ENCODE measurements at regions of chr17 and their contacts with region 1.

Region 1: DNA sequence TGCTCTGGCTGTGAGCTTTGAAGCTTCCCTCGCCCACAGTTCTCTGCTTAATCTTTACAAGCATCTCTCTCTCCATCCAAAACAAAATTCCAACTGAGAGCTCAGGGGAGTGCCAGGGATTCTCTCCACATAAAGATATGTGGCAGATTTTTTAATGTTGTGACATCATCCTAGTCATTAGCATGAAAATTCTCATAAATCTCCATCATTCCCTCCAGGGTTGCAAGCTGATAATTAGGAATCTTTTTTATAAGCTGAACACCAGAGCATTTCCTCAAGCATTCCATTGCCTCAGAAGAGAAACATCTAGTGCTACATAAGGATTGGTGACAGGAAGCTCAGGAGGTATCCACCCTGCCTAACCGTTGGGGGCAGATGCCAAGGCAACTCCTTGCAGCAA is 82.4 kb upstream of the DNAH9 start:
- DNase-seq: no peak
- ATAC-seq: no peak
- H3K4me3 ChIP-seq: no peak overlapping the region
- H3K27ac ChIP-seq: no peak overlapping the region
- H3K4me1 ChIP-seq: no peaks in the 10 kb centered on the region
- H3K27me3 ChIP-seq: no peaks in the 10 kb centered on the region
- CTCF ChIP-seq: no peak
- EP300 ChIP-seq: no peak
- POLR2A ChIP-seq: no peak
- RAD21 ChIP-seq: no peak

Region 2: GRCh38 chr17:11264183-11264871 is 251.6 kb before region 1 on chr17:
- CTCF ChIA-PET with region 1: no interaction called
- POLR2A ChIA-PET with region 1: no interaction called
- RAD21 ChIA-PET with region 1: no interaction called
- SMC1A ChIA-PET with region 1: no interaction called
- in situ Hi-C with region 1: loop called (anchors 10 kb)
- intact Hi-C with region 1: no loop called
- DNase-seq: no peak
- ATAC-seq: no peak
- H3K4me3 ChIP-seq: no peak overlapping the region
- H3K27ac ChIP-seq: no peak overlapping the region
- H3K4me1 ChIP-seq: no peaks in the 10 kb centered on the region
- H3K27me3 ChIP-seq: no peaks in the 10 kb centered on the region
- CTCF ChIP-seq: peak in 2 of 3 experiments; percentile 18 to 26; a peak in 1 of 6 replicates
- EP300 ChIP-seq: no peak
- POLR2A ChIP-seq: no peak
- RAD21 ChIP-seq: no peak

Region 3: GRCh38 chr17:11459861-11460331 is 56.0 kb before region 1 on chr17:
- CTCF ChIA-PET with region 1: no interaction called
- POLR2A ChIA-PET with region 1: no interaction called
- RAD21 ChIA-PET with region 1: no interaction called
- SMC1A ChIA-PET with region 1: no interaction called
- in situ Hi-C with region 1: no loop called
- intact Hi-C with region 1: no loop called
- DNase-seq: no peak
- ATAC-seq: no peak
- H3K4me3 ChIP-seq: no peak overlapping the region
- H3K27ac ChIP-seq: no peak overlapping the region
- H3K4me1 ChIP-seq: no peaks in the 10 kb centered on the region
- H3K27me3 ChIP-seq: no peaks in the 10 kb centered on the region
- CTCF ChIP-seq: no peak
- EP300 ChIP-seq: no peak
- POLR2A ChIP-seq: no peak
- RAD21 ChIP-seq: no peak